Activated CD8-positive, alpha-beta T cell treated with anti-CD3 and anti-CD28 coated beads, Interleukin-2, amount 10 ng/mL, durations not matched to agents 7 days and 5 days (primary cell): ENCODE measurements at regions of chr1 and their contacts with region 1.

Region 1: DNA sequence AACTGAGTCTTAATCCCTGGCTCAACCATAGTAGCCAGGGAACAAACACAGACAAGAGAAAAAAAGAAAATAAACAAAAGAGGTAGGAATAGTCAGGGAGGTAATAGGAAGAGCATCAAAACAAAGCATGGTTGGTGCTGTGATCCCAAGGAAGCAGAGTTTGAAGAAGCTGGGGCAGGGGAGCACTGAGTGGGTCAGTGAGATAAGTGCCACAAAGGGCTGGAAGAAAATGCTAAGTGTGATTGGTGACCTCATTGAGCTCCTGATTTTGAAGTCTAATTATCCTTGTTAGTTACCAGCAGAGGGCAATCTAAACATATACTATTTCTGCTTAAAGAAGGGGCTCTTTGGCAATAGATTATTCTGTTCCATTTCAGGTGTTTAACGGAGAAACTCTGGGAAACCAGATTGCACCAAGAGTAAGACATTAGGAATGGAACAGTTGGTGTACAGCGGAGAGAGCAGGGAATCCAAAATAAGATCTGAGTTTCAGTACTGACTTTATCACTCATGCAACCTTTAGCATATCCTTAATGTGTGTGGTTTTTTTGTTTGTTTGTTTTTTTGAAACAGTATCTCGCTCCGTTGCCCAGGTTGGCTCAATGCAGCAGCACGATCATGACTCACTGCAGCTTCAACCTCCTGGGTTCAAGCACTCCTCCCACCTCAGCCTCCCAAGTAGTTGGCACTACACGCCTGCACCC is 30.7 kb upstream of the KIAA1614 start:
- DNase-seq: no peak
- ATAC-seq: no peak
- H3K4me3 Mint-ChIP-seq: no peak overlapping the region
- H3K27ac Mint-ChIP-seq: no peak overlapping the region
- H3K4me1 Mint-ChIP-seq: no peaks in the 10 kb centered on the region
- H3K27me3 Mint-ChIP-seq: no peaks in the 10 kb centered on the region

Region 2: GRCh38 chr1:180691301-180691913 is 190.6 kb before region 1 on chr1:
- CTCF ChIA-PET with region 1: no interaction called
- POLR2A ChIA-PET with region 1: no interaction called
- DNase-seq: no peak
- ATAC-seq: no peak
- H3K4me3 Mint-ChIP-seq: no peak overlapping the region
- H3K27ac Mint-ChIP-seq: no peak overlapping the region
- H3K4me1 Mint-ChIP-seq: peaks cover 12% of the 10 kb centered on the region
- H3K27me3 Mint-ChIP-seq: no peaks in the 10 kb centered on the region

Region 3: GRCh38 chr1:181021811-181022434 is 140.0 kb after region 1 on chr1:
- CTCF ChIA-PET with region 1: interaction called, 10 read pairs
- POLR2A ChIA-PET with region 1: no interaction called
- DNase-seq: peak; percentile 72
- ATAC-seq: peak; percentile 38
- H3K4me3 Mint-ChIP-seq: peak overlapping the region; percentile 93
- H3K27ac Mint-ChIP-seq: peak overlapping the region; percentile 93
- H3K4me1 Mint-ChIP-seq: peaks cover 51% of the 10 kb centered on the region
- H3K27me3 Mint-ChIP-seq: peaks cover 18% of the 10 kb centered on the region

Region 4: GRCh38 chr1:181152892-181153633 is 271.1 kb after region 1 on chr1:
- CTCF ChIA-PET with region 1: interaction called, 13 read pairs
- POLR2A ChIA-PET with region 1: no interaction called
- DNase-seq: no peak
- ATAC-seq: no peak
- H3K4me3 Mint-ChIP-seq: no peak overlapping the region
- H3K27ac Mint-ChIP-seq: no peak overlapping the region
- H3K4me1 Mint-ChIP-seq: peaks cover 55% of the 10 kb centered on the region
- H3K27me3 Mint-ChIP-seq: peaks cover 16% of the 10 kb centered on the region

Region 5: DNA sequence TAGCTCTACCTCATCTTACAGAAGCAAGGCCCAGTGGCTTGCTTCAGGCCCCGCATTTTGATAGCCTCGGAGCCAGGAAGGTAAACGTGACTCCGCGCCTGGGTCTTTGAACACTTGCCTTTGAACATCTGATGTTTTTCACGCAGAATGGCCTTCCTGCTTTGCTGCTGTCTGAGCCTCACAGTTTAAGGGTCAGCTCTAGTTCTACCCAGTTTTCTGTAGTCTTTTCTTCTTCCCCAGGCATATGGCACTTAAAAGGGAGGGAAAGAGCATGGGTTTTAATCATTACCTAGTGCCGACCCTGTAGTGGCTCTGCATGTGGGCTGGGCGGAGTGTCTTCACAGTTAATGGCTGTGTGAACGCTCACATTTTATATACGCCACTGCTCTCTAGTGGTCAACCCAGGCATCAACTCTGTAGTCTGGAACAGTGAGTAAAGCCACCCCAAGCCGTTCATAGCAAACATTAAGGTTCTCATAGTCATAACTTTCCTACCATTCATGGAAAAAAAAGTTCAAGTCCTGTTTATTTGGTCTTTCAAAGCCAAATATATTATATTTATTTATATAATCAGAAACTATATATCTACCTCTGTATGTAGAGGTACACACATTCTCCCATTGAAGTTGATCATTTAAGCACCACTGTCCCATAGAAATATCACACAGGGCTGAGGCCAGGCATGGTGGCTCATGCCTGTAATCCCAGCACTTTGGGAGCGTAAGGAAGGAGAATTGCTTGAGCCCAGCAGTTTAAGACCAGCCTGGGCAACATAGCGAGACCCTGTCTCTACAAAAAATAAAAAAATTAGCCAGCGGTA is 284.6 kb after region 1 on chr1:
- CTCF ChIA-PET with region 1: interaction called, 24 read pairs
- POLR2A ChIA-PET with region 1: interaction called, 3 read pairs
- DNase-seq: peak; percentile 84
- ATAC-seq: peak; percentile 100
- H3K4me3 Mint-ChIP-seq: no peak overlapping the region
- H3K27ac Mint-ChIP-seq: peak overlapping the region; percentile 53
- H3K4me1 Mint-ChIP-seq: peaks cover 8% of the 10 kb centered on the region
- H3K27me3 Mint-ChIP-seq: peaks cover 6% of the 10 kb centered on the region